HepG2 (cell line): ENCODE measurements at regions of chr5 and their contacts with region 1.

Region 1: GRCh38 chr5:141968914-141969608 is at the start of gene RNF14:
- DNase-seq: peak; percentile 87
- ATAC-seq: peak; percentile 98
- H3K4me3 ChIP-seq: peak within 1 kb of the TSS; percentile 76 to 95 (median 89)
- H3K27ac ChIP-seq: peak within 1 kb of the TSS; percentile 87
- H3K4me1 ChIP-seq: peaks cover 49% of the 10 kb centered on the region
- H3K27me3 ChIP-seq: no peaks in the 10 kb centered on the region; a peak in 2 of 5 replicates
- CTCF ChIP-seq: peak; percentile 91
- EP300 ChIP-seq: peak; percentile 12 to 34; a peak in 2 of 4 replicates
- POLR2A ChIP-seq: peak; percentile 83 to 91
- RAD21 ChIP-seq: no peak; the same call in none of the 2 replicates
- total RNA-seq, gene RNF14: 28.1 and 42.4 TPM in 2 replicates

Region 2: GRCh38 chr5:141889282-141889871 is 79.7 kb before region 1 on chr5:
- CTCF ChIA-PET with region 1: no interaction called
- POLR2A ChIA-PET with region 1: no interaction called
- in situ Hi-C with region 1: no loop called
- intact Hi-C with region 1: no loop called
- DNase-seq: no peak
- ATAC-seq: 0 out of 3 replicates have a peak, but pooled peaks have one; percentile 44
- H3K4me3 ChIP-seq: no peak overlapping the region
- H3K27ac ChIP-seq: no peak overlapping the region
- H3K4me1 ChIP-seq: no peaks in the 10 kb centered on the region
- H3K27me3 ChIP-seq: no peaks in the 10 kb centered on the region
- CTCF ChIP-seq: peak; percentile 43
- EP300 ChIP-seq: no peak
- POLR2A ChIP-seq: no peak
- RAD21 ChIP-seq: no peak

Region 3: GRCh38 chr5:141923448-141924352 is 45.4 kb before region 1 on chr5 and contains the start of gene DELE1:
- CTCF ChIA-PET with region 1: no interaction called
- POLR2A ChIA-PET with region 1: interaction called, 26 read pairs
- in situ Hi-C with region 1: no loop called
- intact Hi-C with region 1: loop called (anchors 5 kb)
- DNase-seq: peak; percentile 90
- ATAC-seq: peak; percentile 98
- H3K4me3 ChIP-seq: peak within 1 kb of the TSS; percentile 76 to 85 (median 80)
- H3K27ac ChIP-seq: peak within 1 kb of the TSS; percentile 96
- H3K4me1 ChIP-seq: peaks cover 42% of the 10 kb centered on the region
- H3K27me3 ChIP-seq: no peaks in the 10 kb centered on the region
- CTCF ChIP-seq: no peak; the same call in 1 of the 2 replicates
- EP300 ChIP-seq: no peak
- POLR2A ChIP-seq: peak; percentile 75 to 90
- RAD21 ChIP-seq: no peak
- total RNA-seq, gene DELE1: 46.5 and 57.5 TPM in 2 replicates